Posterior vena cava (tissue), 2 donors: ENCODE measurements at regions of chr9 and their contacts with region 1.

Region 1: GRCh38 chr9:75909776-75910175 is 19.3 kb downstream of the PCSK5 start:
- DNase-seq: no peak

Region 2: DNA sequence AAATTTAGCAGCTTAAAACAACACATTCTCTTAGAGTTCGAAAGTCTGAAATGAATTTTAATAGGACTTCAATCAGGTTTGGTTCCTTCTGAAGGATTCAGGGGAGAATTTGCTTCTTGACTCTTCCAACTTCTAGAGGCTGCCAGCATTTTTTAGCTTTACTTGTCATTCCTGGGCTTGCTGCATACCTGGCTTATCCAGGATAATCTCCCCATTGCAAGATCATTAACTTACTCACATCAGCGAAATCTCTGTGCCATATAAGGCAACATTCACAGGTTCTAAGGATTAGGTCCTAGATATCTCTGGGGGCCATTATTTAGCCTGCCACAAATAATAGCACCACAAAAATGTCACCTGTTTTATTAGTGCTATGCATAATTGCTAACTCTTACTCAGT is 65.5 kb before region 1 on chr9:
- intact Hi-C with region 1: no loop called
- DNase-seq: no peak

Region 3: GRCh38 chr9:75953218-75953617 is 43.4 kb after region 1 on chr9:
- intact Hi-C with region 1: no loop called
- DNase-seq: no peak

Region 4: GRCh38 chr9:75964427-75964826 is 54.7 kb after region 1 on chr9:
- intact Hi-C with region 1: loop called in 1 of 2 experiments (anchors 2 kb)
- DNase-seq: no peak

Region 5: GRCh38 chr9:75979146-75979761 is 69.5 kb after region 1 on chr9:
- intact Hi-C with region 1: no loop called
- DNase-seq: no peak

Region 6: GRCh38 chr9:76231001-76231400 is 321.2 kb after region 1 on chr9:
- intact Hi-C with region 1: no loop called
- DNase-seq: no peak